Esophagus muscularis mucosa (tissue), 4 donors: ENCODE measurements at regions of chr15 and their contacts with region 1.

Region 1: GRCh38 chr15:74956648-74957300 is at the start of gene RPP25:
- DNase-seq: no peak
- H3K4me3 ChIP-seq: peak within 1 kb of the TSS; percentile 68 to 77 (median 69)
- H3K27ac ChIP-seq: peak within 1 kb of the TSS; percentile 68 to 81 (median 73)
- H3K4me1 ChIP-seq: peaks cover 34 to 58% (median 57%) of the 10 kb centered on the region in 4 donors
- H3K27me3 ChIP-seq: peaks cover 0 to 35% (median 20%) of the 10 kb centered on the region in 4 donors
- CTCF ChIP-seq: no peak
- EP300 ChIP-seq: no peak
- POLR2A ChIP-seq: no peak
- total RNA-seq, gene RPP25: 4.2 to 7.2 (median 7.0) TPM

Region 2: GRCh38 chr15:74635228-74635627 is 321.5 kb before region 1 on chr15:
- intact Hi-C with region 1: loop called (anchors 10 kb)
- DNase-seq: no peak
- H3K4me3 ChIP-seq: no peak overlapping the region
- H3K27ac ChIP-seq: no peak overlapping the region
- H3K4me1 ChIP-seq: peaks cover 0 to 8% (median 0%) of the 10 kb centered on the region in 4 donors
- H3K27me3 ChIP-seq: no peaks in the 10 kb centered on the region
- CTCF ChIP-seq: peak; percentile 77 to 85 (median 79)
- EP300 ChIP-seq: no peak
- POLR2A ChIP-seq: no peak